Activated B cell treated with CpG ODN at 0.5 μM for 24 hours (primary cell): ENCODE measurements at regions of chr5 and their contacts with region 1.

Region 1: DNA sequence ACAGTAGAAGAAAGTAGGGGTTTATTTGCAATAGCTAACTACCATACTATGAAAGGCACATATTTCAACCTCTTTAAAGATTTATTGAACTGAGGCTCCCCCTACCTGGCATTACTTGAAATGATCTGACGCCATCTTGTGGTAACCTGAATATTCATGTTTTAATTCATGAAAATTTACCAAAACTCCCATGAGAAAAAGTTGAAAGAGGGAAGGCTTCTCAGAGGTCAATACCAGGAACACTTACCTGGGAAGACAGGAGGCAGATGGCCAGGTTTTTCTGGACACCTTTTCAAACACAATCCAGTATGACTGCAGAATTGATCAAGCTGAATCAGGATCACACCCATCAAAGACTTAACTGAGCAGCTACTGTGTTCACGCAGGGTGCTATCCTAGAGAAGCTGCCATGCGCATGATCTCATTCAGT is 9.4 kb downstream of the PRELID2 start:
- DNase-seq: no peak
- ATAC-seq: peak; percentile 31
- H3K4me3 Mint-ChIP-seq: no peak overlapping the region
- H3K27ac Mint-ChIP-seq: no peak overlapping the region
- H3K4me1 Mint-ChIP-seq: no peaks in the 10 kb centered on the region
- H3K27me3 Mint-ChIP-seq: no peaks in the 10 kb centered on the region
- CTCF ChIP-seq: peak; percentile 58

Region 2: GRCh38 chr5:144487207-144487606 is 1338.6 kb before region 1 on chr5:
- CTCF ChIA-PET with region 1: no interaction called
- POLR2A ChIA-PET with region 1: no interaction called
- intact Hi-C with region 1: loop called (anchors 5 kb)
- DNase-seq: no peak
- ATAC-seq: no peak
- H3K4me3 Mint-ChIP-seq: no peak overlapping the region
- H3K27ac Mint-ChIP-seq: no peak overlapping the region
- H3K4me1 Mint-ChIP-seq: no peaks in the 10 kb centered on the region
- H3K27me3 Mint-ChIP-seq: no peaks in the 10 kb centered on the region
- CTCF ChIP-seq: no peak

Region 3: GRCh38 chr5:145681686-145682085 is 144.1 kb before region 1 on chr5:
- CTCF ChIA-PET with region 1: interaction called, 3 read pairs
- POLR2A ChIA-PET with region 1: no interaction called
- intact Hi-C with region 1: loop called (anchors 1 kb)
- DNase-seq: no peak
- ATAC-seq: no peak
- H3K4me3 Mint-ChIP-seq: no peak overlapping the region
- H3K27ac Mint-ChIP-seq: no peak overlapping the region
- H3K4me1 Mint-ChIP-seq: no peaks in the 10 kb centered on the region
- H3K27me3 Mint-ChIP-seq: peaks cover 4% of the 10 kb centered on the region
- CTCF ChIP-seq: no peak

Region 4: DNA sequence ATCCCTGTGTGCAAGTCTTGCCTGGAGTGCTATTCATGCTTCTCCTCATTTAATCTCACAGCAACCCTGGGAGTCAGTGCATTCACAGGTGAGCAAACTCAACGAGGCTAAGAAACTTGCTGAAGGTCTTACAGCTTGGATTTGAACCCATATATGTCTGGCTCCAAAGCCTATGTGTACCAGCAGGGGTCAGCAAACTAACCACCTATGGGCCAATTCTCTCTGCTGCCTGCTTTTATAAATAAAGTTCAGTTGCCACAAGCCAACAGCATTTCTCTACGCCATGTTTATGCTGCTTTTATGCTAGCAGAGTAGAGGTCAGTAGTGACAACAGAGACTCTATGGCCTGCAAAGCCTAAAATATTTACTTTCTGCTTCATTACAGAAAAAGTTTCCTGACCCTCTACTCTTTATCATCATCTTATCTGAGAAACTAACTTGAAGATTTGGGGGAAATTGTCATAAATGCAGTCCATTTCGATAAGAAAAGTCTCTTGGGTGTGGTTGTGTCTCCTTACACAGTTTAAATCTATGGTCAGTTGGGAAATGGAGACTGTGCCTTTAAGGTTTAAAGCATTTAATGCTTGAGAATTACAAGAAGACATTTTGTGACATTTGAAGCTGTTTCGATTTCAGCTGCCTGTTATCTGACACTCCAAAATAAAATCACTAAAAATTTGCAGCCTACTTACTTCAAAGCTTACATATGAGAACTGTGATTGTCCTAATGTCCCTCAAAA is 128.3 kb before region 1 on chr5:
- CTCF ChIA-PET with region 1: interaction called, 4 read pairs
- POLR2A ChIA-PET with region 1: no interaction called
- intact Hi-C with region 1: loop called (anchors 5 kb)
- DNase-seq: no peak
- ATAC-seq: no peak
- H3K4me3 Mint-ChIP-seq: no peak overlapping the region
- H3K27ac Mint-ChIP-seq: no peak overlapping the region
- H3K4me1 Mint-ChIP-seq: no peaks in the 10 kb centered on the region
- H3K27me3 Mint-ChIP-seq: no peaks in the 10 kb centered on the region
- CTCF ChIP-seq: no peak